IMR-90 (cell line): ENCODE measurements at regions of chr19 and their contacts with region 1.

Region 1: DNA sequence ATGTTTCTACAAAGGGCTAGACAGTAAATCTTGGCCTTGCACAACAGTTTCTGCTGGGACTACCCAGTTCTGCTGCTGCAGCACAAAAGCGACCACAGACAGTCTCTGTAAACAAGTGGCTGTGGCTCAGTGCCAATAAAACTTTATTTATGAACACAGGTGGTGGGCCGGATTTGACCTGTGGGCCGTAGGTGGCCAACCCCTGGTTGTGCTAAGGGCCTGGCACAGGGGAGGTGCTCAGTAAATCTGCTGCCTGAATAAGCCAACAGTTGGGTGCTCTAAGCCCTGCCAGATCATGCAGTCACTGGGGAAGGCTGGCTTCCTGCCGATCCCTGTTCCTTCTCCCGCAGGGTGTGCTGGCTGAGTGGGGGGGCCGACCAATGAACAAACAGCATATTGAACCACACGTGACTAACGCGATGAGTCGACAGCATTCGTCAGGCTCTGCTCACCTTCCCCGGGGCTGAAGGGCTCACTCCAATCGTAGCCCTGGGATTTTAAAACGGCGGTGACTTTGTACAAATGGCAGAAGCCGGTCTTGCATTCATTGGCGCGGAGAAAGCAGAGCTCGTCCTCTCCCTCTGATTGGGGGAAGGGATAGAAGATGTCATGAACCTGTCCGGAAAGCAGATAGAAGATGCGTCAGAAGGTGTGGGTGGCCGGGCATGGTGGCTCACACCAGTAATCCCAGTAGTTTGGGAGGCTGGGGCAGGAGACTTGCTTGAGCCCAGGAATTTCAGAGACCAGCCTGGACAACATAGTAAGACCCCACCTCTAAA is 24.3 kb upstream of the MYDGF start:
- DNase-seq: peak; percentile 94
- ATAC-seq: peak; percentile 63
- H3K4me3 ChIP-seq: no peak overlapping the region
- H3K27ac ChIP-seq: peak overlapping the region; percentile 47
- H3K4me1 ChIP-seq: peaks cover 14% of the 10 kb centered on the region
- H3K27me3 ChIP-seq: no peaks in the 10 kb centered on the region
- CTCF ChIP-seq: no peak
- POLR2A ChIP-seq: no peak
- RAD21 ChIP-seq: no peak

Region 2: GRCh38 chr19:4723367-4724187 is 29.2 kb after region 1 on chr19 and contains the start of gene DPP9:
- CTCF ChIA-PET with region 1: no interaction called
- POLR2A ChIA-PET with region 1: interaction called, 20 read pairs
- dilution Hi-C with region 1: no loop called
- in situ Hi-C with region 1: no loop called
- intact Hi-C with region 1: no loop called
- DNase-seq: peak; percentile 98
- ATAC-seq: peak; percentile 93
- H3K4me3 ChIP-seq: peak within 1 kb of the TSS; percentile 95
- H3K27ac ChIP-seq: peak within 1 kb of the TSS; percentile 66
- H3K4me1 ChIP-seq: peaks cover 6% of the 10 kb centered on the region
- H3K27me3 ChIP-seq: no peaks in the 10 kb centered on the region
- CTCF ChIP-seq: peak; percentile 43
- POLR2A ChIP-seq: no peak
- RAD21 ChIP-seq: peak; percentile 36
- total RNA-seq, gene DPP9: 12.2 and 12.4 TPM in 2 replicates

Region 3: GRCh38 chr19:4867534-4868285 is 173.3 kb after region 1 on chr19 and contains the start of gene PLIN3:
- CTCF ChIA-PET with region 1: no interaction called
- POLR2A ChIA-PET with region 1: no interaction called
- dilution Hi-C with region 1: no loop called
- in situ Hi-C with region 1: no loop called
- intact Hi-C with region 1: no loop called
- DNase-seq: peak; percentile 93
- ATAC-seq: peak; percentile 95
- H3K4me3 ChIP-seq: peak within 1 kb of the TSS; percentile 76
- H3K27ac ChIP-seq: peak within 1 kb of the TSS; percentile 82
- H3K4me1 ChIP-seq: no peaks in the 10 kb centered on the region
- H3K27me3 ChIP-seq: no peaks in the 10 kb centered on the region
- CTCF ChIP-seq: no peak
- POLR2A ChIP-seq: no peak
- RAD21 ChIP-seq: no peak
- total RNA-seq, gene PLIN3: 246 and 289 TPM in 2 replicates